Ovary (tissue), 10 donors: ENCODE measurements at regions of chr1 and their contacts with region 1.

Region 1: GRCh38 chr1:159823406-159823805 is 3.3 kb upstream of the SLAMF8 start:
- DNase-seq: no peak
- H3K4me3 ChIP-seq: no peak overlapping the region
- H3K27ac ChIP-seq: no peak overlapping the region
- H3K4me1 ChIP-seq: no peaks in the 10 kb centered on the region
- H3K27me3 ChIP-seq: no peaks in the 10 kb centered on the region
- CTCF ChIP-seq: no peak
- EP300 ChIP-seq: no peak
- POLR2A ChIP-seq: no peak

Region 2: DNA sequence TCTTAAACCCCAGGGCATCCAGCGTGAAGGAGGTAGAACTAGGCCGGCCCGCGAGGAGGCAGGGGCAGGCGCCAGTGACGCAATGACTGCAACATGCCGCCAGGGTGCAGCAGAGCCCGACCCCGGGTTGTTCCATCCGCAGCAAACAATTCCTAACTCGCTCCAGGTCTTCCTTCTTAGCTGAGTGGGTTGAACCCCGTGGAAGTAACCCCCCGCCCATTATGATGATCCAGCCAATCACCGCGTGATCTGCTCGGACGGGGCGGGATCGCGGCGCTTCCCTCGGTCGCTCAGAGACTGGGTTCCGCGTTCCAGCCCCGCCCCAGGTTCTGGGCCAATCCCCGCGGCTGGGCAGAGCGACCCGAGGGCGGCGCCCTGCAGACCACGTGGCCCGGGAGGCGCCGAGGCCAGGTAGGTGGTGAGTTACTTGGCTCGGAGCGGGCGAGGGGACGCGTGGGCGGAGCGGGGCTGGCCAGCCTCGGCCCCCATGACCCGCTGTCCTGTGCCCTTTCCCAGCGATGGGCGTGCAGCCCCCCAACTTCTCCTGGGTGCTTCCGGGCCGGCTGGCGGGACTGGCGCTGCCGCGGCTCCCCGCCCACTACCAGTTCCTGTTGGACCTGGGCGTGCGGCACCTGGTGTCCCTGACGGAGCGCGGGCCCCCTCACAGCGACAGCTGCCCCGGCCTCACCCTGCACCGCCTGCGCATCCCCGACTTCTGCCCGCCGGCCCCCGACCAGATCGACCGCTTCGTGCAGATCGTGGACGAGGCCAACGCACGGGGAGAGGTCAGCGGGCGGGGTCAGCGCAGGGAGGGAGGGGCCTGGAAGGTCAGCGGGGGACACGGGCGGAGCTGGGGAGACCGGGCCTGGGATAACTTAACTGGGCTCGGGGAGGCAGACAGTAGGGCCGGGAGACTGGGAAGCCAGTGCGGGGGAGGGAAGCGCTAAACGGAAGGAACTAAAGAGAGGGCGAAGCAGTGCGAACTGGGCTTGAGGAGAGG is 42.5 kb before region 1 on chr1 and contains the start of gene DUSP23:
- intact Hi-C with region 1: no loop called
- DNase-seq: peak; percentile 96 to 98 (median 98)
- H3K4me3 ChIP-seq: peak within 1 kb of the TSS; percentile 68
- H3K27ac ChIP-seq: peak within 1 kb of the TSS; percentile 18 to 75
- H3K4me1 ChIP-seq: no peaks in the 10 kb centered on the region
- H3K27me3 ChIP-seq: no peaks in the 10 kb centered on the region
- CTCF ChIP-seq: peak; percentile 93 to 96 (median 95)
- EP300 ChIP-seq: peak; percentile 11
- POLR2A ChIP-seq: peak; percentile 70
- total RNA-seq, gene DUSP23: 26.9 to 115 (median 37.5) TPM

Region 3: DNA sequence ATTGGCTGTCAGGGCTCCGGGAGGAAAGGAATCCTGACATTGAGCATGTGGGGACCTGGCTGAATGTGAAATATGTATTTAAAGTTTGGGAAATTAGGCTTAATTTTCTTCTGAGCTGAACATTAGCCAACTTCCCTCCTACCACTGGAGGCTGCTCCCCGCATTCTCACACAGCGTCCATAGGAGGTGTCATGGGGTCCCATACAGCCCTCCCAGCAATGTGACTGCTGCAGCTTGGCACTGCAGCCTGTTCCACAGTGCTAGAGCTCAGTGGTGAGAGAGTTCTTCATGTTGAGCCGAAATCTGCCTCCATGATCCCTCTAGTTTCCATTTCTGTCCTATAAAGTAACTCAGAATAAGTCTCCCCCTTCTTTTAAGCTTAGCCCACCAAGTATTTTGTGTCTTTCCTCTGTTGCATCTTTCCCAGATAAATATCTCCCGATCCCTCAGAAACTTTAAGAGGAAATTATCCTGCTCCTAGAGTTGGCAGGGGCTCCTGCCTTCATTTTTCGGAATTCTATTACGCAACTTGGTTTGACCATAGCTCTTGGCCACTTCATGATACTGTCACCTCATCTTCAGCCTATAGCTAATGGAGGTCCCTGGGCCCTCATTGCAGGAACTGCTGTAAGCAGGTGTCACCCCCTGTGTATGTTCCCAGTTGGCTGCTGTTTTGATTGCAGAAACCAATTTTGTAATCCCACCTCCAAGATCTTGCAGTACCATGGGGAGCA is 19.3 kb before region 1 on chr1:
- intact Hi-C with region 1: loop called in 1 of 4 experiments (anchors 2 kb)
- DNase-seq: no peak
- H3K4me3 ChIP-seq: no peak overlapping the region
- H3K27ac ChIP-seq: peak overlapping the region in 1 of 2 donors; percentile 4
- H3K4me1 ChIP-seq: peaks cover 11% of the 10 kb centered on the region
- H3K27me3 ChIP-seq: no peaks in the 10 kb centered on the region
- CTCF ChIP-seq: no peak
- EP300 ChIP-seq: no peak
- POLR2A ChIP-seq: no peak